Sigmoid colon (tissue), 7 donors: ENCODE measurements at regions of chr9 and their contacts with region 1.

Region 1: GRCh38 chr9:2014696-2015580 is at the start of gene SMARCA2:
- DNase-seq: peak; percentile 99
- H3K4me3 ChIP-seq: peak within 1 kb of the TSS; percentile 81 to 89 (median 88)
- H3K27ac ChIP-seq: peak within 1 kb of the TSS; percentile 96 to 98 (median 96)
- H3K4me1 ChIP-seq: peaks cover 0 to 33% (median 27%) of the 10 kb centered on the region in 4 donors
- H3K27me3 ChIP-seq: no peaks in the 10 kb centered on the region
- CTCF ChIP-seq: no peak
- EP300 ChIP-seq: peak in 1 of 4 donors; percentile 16
- POLR2A ChIP-seq: peak; percentile 71 to 82
- total RNA-seq, gene SMARCA2: 75.0 to 209 (median 88.9) TPM

Region 2: GRCh38 chr9:1804128-1804865 is 210.6 kb before region 1 on chr9:
- intact Hi-C with region 1: no loop called
- DNase-seq: no peak
- H3K4me3 ChIP-seq: no peak overlapping the region
- H3K27ac ChIP-seq: no peak overlapping the region
- H3K4me1 ChIP-seq: no peaks in the 10 kb centered on the region
- H3K27me3 ChIP-seq: no peaks in the 10 kb centered on the region
- CTCF ChIP-seq: no peak
- EP300 ChIP-seq: no peak
- POLR2A ChIP-seq: no peak

Region 3: DNA sequence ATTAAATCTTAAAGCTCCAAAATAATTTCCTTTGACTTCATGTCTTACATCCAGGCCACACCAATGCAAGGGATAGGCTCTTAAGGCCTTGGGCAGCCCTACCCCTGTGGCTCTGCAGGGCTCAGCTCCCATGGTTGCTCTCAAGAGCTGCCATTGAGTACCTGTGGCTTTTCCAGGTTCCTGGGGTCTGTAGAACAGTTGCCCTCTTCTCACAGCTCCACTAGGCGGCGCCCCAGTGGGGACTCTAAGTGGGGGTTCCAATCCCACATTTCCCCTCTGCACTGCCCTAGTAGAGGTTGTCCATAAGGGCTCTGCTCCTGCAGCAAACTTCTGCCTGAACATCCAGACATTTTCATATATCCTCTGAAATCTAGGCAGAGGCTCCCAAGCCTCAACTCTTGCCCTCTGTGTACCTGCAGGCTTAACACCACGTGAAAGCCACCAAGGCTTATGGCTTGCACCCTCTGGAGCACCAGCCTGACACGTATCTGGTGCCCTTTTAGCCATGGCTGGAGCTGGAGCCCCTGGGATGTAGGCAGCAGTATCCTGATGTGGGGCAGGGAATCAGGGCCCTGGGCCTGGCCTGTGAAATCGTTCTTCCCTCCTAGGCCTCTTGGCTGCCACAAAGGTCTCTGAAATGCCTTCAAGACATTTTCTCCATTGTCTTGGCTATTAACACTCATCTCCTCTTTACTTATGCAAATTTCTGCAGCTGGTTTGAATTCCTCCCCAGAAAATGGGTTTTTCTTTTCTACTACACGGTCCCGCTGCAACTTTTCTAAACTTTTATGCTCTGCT is 185.3 kb after region 1 on chr9:
- intact Hi-C with region 1: no loop called
- DNase-seq: no peak
- H3K4me3 ChIP-seq: no peak overlapping the region
- H3K27ac ChIP-seq: no peak overlapping the region
- H3K4me1 ChIP-seq: no peaks in the 10 kb centered on the region
- H3K27me3 ChIP-seq: no peaks in the 10 kb centered on the region
- CTCF ChIP-seq: no peak
- EP300 ChIP-seq: no peak
- POLR2A ChIP-seq: no peak

Region 4: DNA sequence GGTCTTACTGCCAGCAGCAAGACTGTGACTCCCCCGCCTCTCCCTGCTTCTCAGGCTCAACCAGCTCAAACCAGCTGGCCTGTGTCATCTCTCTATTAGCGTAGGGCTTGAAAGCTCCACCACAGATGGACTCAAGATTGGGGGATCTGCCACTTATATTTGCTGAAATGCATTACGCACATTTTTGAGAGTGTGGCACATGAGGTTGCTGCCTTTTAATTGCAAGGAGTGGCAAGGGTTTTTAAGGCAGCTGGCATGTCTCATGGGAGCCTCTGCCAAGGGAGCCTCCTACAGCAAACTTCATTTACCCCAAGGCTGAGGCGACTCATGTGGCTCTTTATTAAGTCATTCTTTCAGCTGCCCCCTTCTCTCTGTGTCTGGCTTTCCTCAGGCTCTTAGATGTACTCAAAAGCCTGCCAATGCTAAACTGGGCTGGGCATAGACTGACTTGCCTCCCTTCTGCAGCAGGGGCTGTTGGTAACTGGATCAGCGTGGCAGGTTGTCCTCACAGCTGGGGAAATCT is 219.5 kb after region 1 on chr9:
- intact Hi-C with region 1: loop called (anchors 10 kb)
- DNase-seq: peak; percentile 71
- H3K4me3 ChIP-seq: no peak overlapping the region
- H3K27ac ChIP-seq: peak overlapping the region in 3 of 4 donors; percentile 6 to 63 (median 50)
- H3K4me1 ChIP-seq: peaks cover 0 to 45% (median 15%) of the 10 kb centered on the region in 4 donors
- H3K27me3 ChIP-seq: no peaks in the 10 kb centered on the region
- CTCF ChIP-seq: no peak
- EP300 ChIP-seq: no peak
- POLR2A ChIP-seq: no peak

Region 5: DNA sequence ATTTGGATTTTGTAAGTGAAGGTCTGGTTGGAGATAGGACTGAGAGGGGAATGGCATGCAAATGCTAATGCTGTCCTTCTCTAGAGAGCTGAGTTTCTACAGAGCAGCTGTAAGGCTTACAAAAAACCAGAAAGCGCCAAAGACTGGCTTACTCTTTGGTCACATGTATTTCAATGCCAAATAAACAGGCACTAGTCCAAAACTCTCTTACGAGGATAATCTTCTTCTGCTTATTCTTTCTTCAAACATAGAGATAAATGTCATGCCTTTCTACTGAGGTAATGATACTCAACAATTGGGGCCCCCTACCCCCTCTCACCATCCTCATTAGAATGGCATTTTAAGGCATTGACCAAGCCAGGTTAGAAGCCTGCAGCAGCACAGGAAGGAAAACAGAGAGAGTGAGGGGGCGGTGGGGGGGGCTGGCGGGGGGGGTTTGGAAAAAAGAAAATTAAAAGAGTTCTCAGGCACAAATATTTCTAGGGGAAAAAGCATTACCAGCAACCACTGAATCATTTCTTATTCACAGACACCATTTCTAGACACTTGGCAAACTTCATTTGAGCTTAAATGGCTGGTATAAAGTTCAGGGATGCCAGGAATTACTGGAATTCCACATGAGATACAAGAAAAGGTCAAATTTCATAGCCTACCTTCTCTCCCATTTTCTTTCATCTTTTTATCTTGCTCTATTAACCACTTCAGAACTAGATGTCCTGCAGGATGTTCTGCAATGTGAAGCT is 794.9 kb after region 1 on chr9:
- intact Hi-C with region 1: loop called (anchors 10 kb)
- DNase-seq: no peak
- H3K4me3 ChIP-seq: no peak overlapping the region
- H3K27ac ChIP-seq: peak overlapping the region; percentile 59 to 81 (median 66)
- H3K4me1 ChIP-seq: peaks cover 0 to 46% (median 31%) of the 10 kb centered on the region in 4 donors
- H3K27me3 ChIP-seq: no peaks in the 10 kb centered on the region
- CTCF ChIP-seq: no peak
- EP300 ChIP-seq: peak in 1 of 4 donors; percentile 65
- POLR2A ChIP-seq: no peak

Region 6: DNA sequence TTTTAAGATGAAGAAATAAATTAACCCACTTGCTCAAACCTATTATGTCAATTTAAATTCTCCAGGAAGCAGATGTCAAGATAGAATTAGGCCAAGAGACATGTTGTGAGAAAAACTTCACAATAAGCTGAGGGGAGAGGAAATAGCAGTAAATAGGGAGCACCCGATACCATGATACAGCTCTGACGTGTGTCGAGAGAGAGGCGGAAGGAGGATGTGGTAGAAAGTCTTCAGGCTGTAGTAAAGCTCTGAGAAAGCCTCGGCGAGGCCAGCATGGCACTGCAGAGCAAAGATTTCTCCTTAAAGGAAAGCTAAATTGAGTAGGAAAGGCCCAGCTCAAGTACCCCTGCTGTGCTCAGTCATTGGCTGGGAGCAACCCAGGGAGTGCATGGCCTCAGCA is 835.0 kb after region 1 on chr9:
- intact Hi-C with region 1: loop called (anchors 10 kb)
- DNase-seq: no peak
- H3K4me3 ChIP-seq: no peak overlapping the region
- H3K27ac ChIP-seq: no peak overlapping the region
- H3K4me1 ChIP-seq: peaks cover 0 to 11% (median 8%) of the 10 kb centered on the region in 4 donors
- H3K27me3 ChIP-seq: no peaks in the 10 kb centered on the region
- CTCF ChIP-seq: no peak
- EP300 ChIP-seq: no peak
- POLR2A ChIP-seq: no peak